Right cardiac atrium (tissue), 5 donors: ENCODE measurements at regions of chr13 and their contacts with region 1.

Region 1: GRCh38 chr13:22812794-22813193 is 368.0 kb upstream of the SGCG start:
- DNase-seq: peak; percentile 54 to 81 (median 60)
- ATAC-seq: peak; percentile 78 to 91
- H3K4me3 ChIP-seq: no peak overlapping the region
- H3K27ac ChIP-seq: no peak overlapping the region
- H3K4me1 ChIP-seq: peaks cover 2% of the 10 kb centered on the region
- H3K27me3 ChIP-seq: no peaks in the 10 kb centered on the region

Region 2: GRCh38 chr13:22405891-22406290 is 406.9 kb before region 1 on chr13:
- intact Hi-C with region 1: no loop called
- DNase-seq: no peak
- ATAC-seq: no peak
- H3K4me3 ChIP-seq: no peak overlapping the region
- H3K27ac ChIP-seq: no peak overlapping the region
- H3K4me1 ChIP-seq: no peaks in the 10 kb centered on the region
- H3K27me3 ChIP-seq: no peaks in the 10 kb centered on the region

Region 3: GRCh38 chr13:23321535-23322241 is 508.9 kb after region 1 on chr13:
- intact Hi-C with region 1: loop called in 1 of 4 experiments (anchors 10 kb)
- DNase-seq: peak; percentile 56 to 76 (median 75)
- ATAC-seq: peak; percentile 83 to 93
- H3K4me3 ChIP-seq: peak overlapping the region; percentile 23
- H3K27ac ChIP-seq: no peak overlapping the region
- H3K4me1 ChIP-seq: peaks cover 3% of the 10 kb centered on the region
- H3K27me3 ChIP-seq: no peaks in the 10 kb centered on the region